ENCODE measurements at regions of chr18 and their contacts with region 1.

Region 1: DNA sequence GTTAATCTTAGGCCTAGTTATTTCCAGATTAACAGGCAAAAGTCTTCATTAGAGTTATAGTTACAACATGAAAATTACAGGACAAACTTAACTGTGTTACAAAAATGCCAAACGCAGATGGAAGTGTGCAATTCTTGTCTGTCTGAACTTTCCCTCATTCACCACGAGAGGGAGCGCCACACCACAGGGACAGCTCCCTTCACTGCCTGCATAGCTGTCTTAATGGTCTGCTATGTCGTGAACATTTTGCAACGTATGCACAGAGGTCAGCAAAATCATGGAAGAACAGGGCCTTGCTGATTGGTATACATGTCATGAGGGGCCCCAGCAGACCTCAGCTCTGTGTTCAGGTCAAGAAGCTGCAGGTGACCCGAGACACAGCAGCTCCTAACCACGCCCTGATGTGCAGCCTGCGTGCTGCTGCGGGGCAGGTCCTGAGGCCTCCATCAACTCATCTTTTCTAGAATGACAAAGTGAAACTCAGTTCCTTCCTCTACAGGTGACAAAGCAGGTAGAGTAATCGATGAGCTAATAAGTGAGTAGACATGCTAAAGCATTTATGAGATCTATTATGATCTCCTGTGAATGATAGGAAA is 78.8 kb upstream of the ATP8B1 start:
- DNase-seq: peak; percentile 62
- ATAC-seq: peak; percentile 98
- H3K4me3 ChIP-seq: no peak overlapping the region
- H3K27ac ChIP-seq: no peak overlapping the region
- H3K4me1 ChIP-seq: peaks cover 0 to 2% of the 10 kb centered on the region in 2 experiments; a peak in 1 of 4 replicates
- H3K27me3 ChIP-seq: no peaks in the 10 kb centered on the region
- CTCF ChIP-seq: peak; percentile 82 to 94 (median 90); a peak in 5 of 6 replicates
- POLR2A ChIP-seq: no peak
- RAD21 ChIP-seq: peak; percentile 94

Region 2: DNA sequence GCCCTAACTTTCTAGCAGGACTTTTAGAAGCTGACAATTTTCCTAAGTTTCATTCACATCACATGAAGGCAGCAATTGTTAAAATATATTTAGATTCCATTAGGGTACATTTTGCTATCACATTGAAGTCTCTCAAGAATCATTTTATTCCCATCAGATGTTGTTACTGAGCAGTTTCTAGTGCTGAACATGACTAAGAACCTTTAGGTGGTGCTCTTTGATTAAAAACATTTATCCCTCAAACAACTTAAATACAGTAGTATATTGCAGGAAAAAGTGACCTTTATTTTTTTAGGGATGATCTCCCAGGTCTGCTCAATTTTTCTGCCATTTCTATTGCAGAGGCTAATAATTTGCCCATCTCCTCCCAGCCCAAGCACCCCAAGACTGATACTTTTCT is 237.4 kb before region 1 on chr18:
- CTCF ChIA-PET with region 1: no interaction called
- POLR2A ChIA-PET with region 1: no interaction called
- RAD21 ChIA-PET with region 1: no interaction called
- intact Hi-C with region 1: loop called (anchors 1 kb)
- DNase-seq: no peak
- ATAC-seq: no peak
- H3K4me3 ChIP-seq: no peak overlapping the region
- H3K27ac ChIP-seq: no peak overlapping the region
- H3K4me1 ChIP-seq: no peaks in the 10 kb centered on the region
- H3K27me3 ChIP-seq: no peaks in the 10 kb centered on the region
- CTCF ChIP-seq: peak in 1 of 3 experiments; percentile 7; a peak in 1 of 6 replicates
- POLR2A ChIP-seq: no peak
- RAD21 ChIP-seq: peak; percentile 53

Region 3: GRCh38 chr18:57959278-57959677 is 77.4 kb after region 1 on chr18:
- CTCF ChIA-PET with region 1: interaction called, 15 read pairs
- POLR2A ChIA-PET with region 1: no interaction called
- RAD21 ChIA-PET with region 1: no interaction called
- intact Hi-C with region 1: loop called (anchors 5 kb)
- DNase-seq: peak; percentile 72
- ATAC-seq: peak; percentile 99
- H3K4me3 ChIP-seq: no peak overlapping the region
- H3K27ac ChIP-seq: no peak overlapping the region
- H3K4me1 ChIP-seq: no peaks in the 10 kb centered on the region
- H3K27me3 ChIP-seq: peaks cover 3% of the 10 kb centered on the region; the same call in 1 of the 2 replicates
- CTCF ChIP-seq: peak; percentile 52 to 64 (median 58); a peak in 5 of 6 replicates
- POLR2A ChIP-seq: no peak
- RAD21 ChIP-seq: peak; percentile 69

Region 4: GRCh38 chr18:58117786-58118403 is 236.0 kb after region 1 on chr18:
- CTCF ChIA-PET with region 1: interaction called, 34 read pairs
- POLR2A ChIA-PET with region 1: no interaction called
- RAD21 ChIA-PET with region 1: interaction called, 3 to 11 read pairs
- intact Hi-C with region 1: loop called (anchors 1 kb)
- DNase-seq: peak; percentile 34
- ATAC-seq: peak; percentile 57
- H3K4me3 ChIP-seq: no peak overlapping the region
- H3K27ac ChIP-seq: no peak overlapping the region
- H3K4me1 ChIP-seq: peaks cover 12 to 16% of the 10 kb centered on the region in 2 experiments
- H3K27me3 ChIP-seq: no peaks in the 10 kb centered on the region
- CTCF ChIP-seq: no peak
- POLR2A ChIP-seq: no peak
- RAD21 ChIP-seq: no peak

Region 5: DNA sequence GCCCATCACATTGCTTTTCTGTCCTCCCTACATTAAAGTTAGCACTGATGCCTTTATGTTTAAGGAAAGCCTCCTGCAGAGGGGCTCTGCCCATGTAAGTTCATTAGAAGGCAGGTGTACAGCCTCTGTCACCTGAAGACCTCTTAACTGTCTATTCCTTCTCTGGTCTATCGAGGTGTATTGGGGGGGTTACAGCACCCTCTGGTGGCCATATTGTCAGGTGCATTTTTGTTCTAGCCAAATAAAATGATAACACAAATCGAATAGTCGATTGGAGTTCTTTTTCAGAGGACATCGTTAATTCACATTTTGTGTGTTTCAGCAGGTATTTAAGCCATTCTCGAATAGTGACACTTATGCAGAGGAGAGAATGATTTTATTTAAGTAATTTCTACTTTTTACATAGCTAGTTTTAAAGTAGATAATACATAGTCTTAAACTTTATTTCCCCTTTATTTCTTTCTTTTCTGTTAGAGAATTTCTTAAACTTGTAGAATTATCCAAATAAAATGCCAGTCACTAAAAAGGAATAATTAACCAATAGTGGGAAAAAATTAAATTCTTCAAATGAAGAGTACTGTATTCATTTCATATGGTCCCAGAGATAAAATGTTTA is 298.9 kb after region 1 on chr18:
- CTCF ChIA-PET with region 1: interaction called, 8 read pairs
- POLR2A ChIA-PET with region 1: no interaction called
- RAD21 ChIA-PET with region 1: no interaction called
- intact Hi-C with region 1: loop called (anchors 1 kb)
- DNase-seq: no peak
- ATAC-seq: peak; percentile 59
- H3K4me3 ChIP-seq: no peak overlapping the region
- H3K27ac ChIP-seq: no peak overlapping the region
- H3K4me1 ChIP-seq: peaks cover 22 to 31% of the 10 kb centered on the region in 2 experiments
- H3K27me3 ChIP-seq: no peaks in the 10 kb centered on the region
- CTCF ChIP-seq: peak; percentile 78 to 96 (median 83)
- POLR2A ChIP-seq: no peak
- RAD21 ChIP-seq: peak; percentile 84

Region 6: GRCh38 chr18:58493516-58494253 is 611.8 kb after region 1 on chr18:
- CTCF ChIA-PET with region 1: interaction called, 4 read pairs
- POLR2A ChIA-PET with region 1: no interaction called
- RAD21 ChIA-PET with region 1: no interaction called
- intact Hi-C with region 1: loop called (anchors 5 kb)
- DNase-seq: peak; percentile 56
- ATAC-seq: peak; percentile 94
- H3K4me3 ChIP-seq: no peak overlapping the region
- H3K27ac ChIP-seq: no peak overlapping the region
- H3K4me1 ChIP-seq: peaks cover 0 to 4% of the 10 kb centered on the region in 2 experiments; a peak in 2 of 4 replicates
- H3K27me3 ChIP-seq: peaks cover 6% of the 10 kb centered on the region; the same call in 1 of the 2 replicates
- CTCF ChIP-seq: peak; percentile 77 to 93 (median 81)
- POLR2A ChIP-seq: no peak
- RAD21 ChIP-seq: peak; percentile 86